ENCODE measurements at regions of chr3 and their contacts with region 1.

Region 1: GRCh38 chr3:194070634-194071409 is 65.1 kb upstream of the HES1 start:
- DNase-seq: peak; percentile 64 to 89
- ATAC-seq: peak; percentile 83 to 88
- H3K4me3 ChIP-seq: peak overlapping the region; percentile 48 to 74 (median 70)
- H3K27ac ChIP-seq: peak overlapping the region; percentile 81 to 91 (median 85)
- H3K4me1 ChIP-seq: peaks cover 5 to 6% of the 10 kb centered on the region in 2 donors
- H3K27me3 ChIP-seq: no peaks in the 10 kb centered on the region
- CTCF ChIP-seq: peak in 1 of 5 experiments; percentile 22
- POLR2A ChIP-seq: peak; percentile 39 to 51

Region 2: GRCh38 chr3:193788189-193788991 is 282.4 kb before region 1 on chr3:
- in situ Hi-C with region 1: no loop called
- intact Hi-C with region 1: loop called (anchors 10 kb)
- DNase-seq: peak; percentile 30 to 53
- ATAC-seq: peak; percentile 93 to 97
- H3K4me3 ChIP-seq: no peak overlapping the region
- H3K27ac ChIP-seq: no peak overlapping the region
- H3K4me1 ChIP-seq: peaks cover 7 to 8% of the 10 kb centered on the region in 2 donors
- H3K27me3 ChIP-seq: no peaks in the 10 kb centered on the region
- CTCF ChIP-seq: peak; percentile 68 to 89 (median 78)
- POLR2A ChIP-seq: no peak

Region 3: DNA sequence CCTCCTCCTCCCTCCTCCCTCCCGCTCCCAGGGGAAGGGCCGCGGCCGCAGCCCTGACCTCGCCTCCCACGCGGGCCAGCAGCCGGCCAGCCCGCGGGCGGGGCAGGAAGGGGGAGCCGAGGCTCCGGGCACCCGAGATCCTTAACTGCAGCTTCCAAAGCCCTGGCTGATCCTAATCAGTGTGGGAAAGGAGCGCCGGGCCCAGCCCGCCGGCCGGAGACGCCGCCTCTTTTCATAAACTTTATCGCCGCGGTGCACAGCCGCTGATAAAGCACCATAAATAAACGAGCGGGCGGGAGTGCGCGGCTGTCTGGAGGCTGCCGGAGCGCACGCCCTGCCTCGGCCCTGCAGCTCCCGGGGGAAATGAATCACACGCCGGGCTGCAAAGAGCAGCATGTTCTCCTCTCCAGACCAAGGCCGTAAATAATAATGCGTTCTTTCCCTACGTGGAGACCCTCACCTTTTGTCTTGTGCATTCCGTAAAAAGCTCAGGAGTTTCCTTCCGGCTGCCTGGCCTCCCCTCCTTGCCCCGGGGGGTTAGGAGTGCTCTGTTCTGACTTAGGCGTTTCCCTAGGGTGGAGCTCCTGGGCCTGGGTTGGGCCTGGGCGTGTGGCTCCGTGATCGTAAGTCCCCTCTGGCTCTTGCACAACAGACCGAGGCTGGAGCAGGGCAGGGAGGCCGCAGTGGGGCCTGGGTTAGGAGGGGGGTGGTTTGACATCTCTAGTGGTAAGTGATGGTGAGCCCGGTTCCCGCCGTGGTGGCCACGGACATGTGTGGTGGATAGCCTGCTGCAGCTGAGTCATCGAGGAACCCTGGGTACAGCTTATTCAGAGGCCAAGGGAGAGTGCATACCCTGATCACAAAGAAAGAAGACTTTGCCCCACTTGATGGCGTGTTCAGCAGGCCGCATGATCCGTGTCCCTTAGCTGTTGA is 67.4 kb before region 1 on chr3:
- in situ Hi-C with region 1: loop called in 2 of 4 experiments (anchors 10 kb)
- intact Hi-C with region 1: no loop called
- DNase-seq: peak; percentile 74 to 85
- ATAC-seq: peak; percentile 74 to 82
- H3K4me3 ChIP-seq: peak overlapping the region; percentile 43 to 54 (median 52)
- H3K27ac ChIP-seq: peak overlapping the region; percentile 85 to 90 (median 86)
- H3K4me1 ChIP-seq: peaks cover 32 to 41% of the 10 kb centered on the region in 2 donors
- H3K27me3 ChIP-seq: no peaks in the 10 kb centered on the region
- CTCF ChIP-seq: no peak
- POLR2A ChIP-seq: peak; percentile 13 to 27

Region 4: DNA sequence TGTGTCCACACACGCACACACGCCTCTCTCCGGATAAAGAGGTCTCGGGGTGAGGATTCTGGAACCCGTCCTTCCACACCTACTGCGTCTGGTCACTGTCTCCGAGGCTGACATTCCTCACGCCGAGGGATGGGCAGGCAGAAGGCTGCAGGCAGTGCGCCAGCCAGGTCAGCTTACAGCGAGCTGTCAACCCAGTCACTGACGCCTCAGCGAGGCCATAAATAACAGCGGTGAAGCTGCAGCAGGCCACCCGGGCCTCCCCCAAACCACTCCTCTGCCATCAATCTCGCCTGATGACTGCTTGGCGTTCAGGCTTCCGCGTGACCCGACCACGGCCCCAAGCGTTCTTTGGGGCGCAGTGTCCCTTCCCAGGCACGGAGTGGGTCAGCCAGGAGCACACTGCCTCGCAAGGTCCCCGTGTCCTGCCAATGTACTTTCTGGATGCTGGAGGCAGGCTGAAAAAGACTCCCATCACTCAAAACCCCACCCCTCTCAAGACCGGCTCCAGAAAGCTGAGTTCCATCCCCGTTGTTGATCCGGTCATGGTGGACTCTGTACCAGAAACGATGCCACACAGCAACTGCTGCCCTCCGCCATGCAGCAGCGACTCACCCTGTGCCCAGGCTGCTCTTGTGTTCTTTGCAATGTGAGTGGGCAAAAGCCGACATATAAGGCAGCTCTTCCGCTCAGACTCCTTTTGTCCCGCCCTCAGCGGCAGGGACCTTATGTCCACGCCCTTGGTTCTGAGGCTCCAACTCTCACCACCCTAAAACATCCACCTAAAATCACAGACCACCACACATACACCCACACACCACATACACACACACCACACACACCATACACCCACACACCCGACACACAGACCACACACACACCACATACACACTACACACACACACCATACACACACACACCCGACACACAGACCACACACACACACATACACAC is 253.2 kb after region 1 on chr3:
- in situ Hi-C with region 1: loop called in 2 of 4 experiments (anchors 10 kb)
- intact Hi-C with region 1: loop called (anchors 5 kb)
- DNase-seq: peak; percentile 89 to 94
- ATAC-seq: peak; percentile 86 to 89
- H3K4me3 ChIP-seq: peak overlapping the region; percentile 33 to 51 (median 48)
- H3K27ac ChIP-seq: peak overlapping the region; percentile 85 to 92 (median 88)
- H3K4me1 ChIP-seq: peaks cover 7 to 10% of the 10 kb centered on the region in 2 donors
- H3K27me3 ChIP-seq: peaks cover 0 to 10% (median 0%) of the 10 kb centered on the region in 3 donors
- CTCF ChIP-seq: no peak
- POLR2A ChIP-seq: peak; percentile 24 to 33